ENCODE measurements at regions of chr10 and their contacts with region 1.

Region 1: GRCh38 chr10:97025613-97026242 is 160.0 kb downstream of the SLIT1 start:
- H3K4me3 Mint-ChIP-seq: no peak overlapping the region
- H3K27ac Mint-ChIP-seq: no peak overlapping the region
- H3K4me1 Mint-ChIP-seq: peaks cover 5% of the 10 kb centered on the region
- H3K27me3 Mint-ChIP-seq: no peaks in the 10 kb centered on the region

Region 2: DNA sequence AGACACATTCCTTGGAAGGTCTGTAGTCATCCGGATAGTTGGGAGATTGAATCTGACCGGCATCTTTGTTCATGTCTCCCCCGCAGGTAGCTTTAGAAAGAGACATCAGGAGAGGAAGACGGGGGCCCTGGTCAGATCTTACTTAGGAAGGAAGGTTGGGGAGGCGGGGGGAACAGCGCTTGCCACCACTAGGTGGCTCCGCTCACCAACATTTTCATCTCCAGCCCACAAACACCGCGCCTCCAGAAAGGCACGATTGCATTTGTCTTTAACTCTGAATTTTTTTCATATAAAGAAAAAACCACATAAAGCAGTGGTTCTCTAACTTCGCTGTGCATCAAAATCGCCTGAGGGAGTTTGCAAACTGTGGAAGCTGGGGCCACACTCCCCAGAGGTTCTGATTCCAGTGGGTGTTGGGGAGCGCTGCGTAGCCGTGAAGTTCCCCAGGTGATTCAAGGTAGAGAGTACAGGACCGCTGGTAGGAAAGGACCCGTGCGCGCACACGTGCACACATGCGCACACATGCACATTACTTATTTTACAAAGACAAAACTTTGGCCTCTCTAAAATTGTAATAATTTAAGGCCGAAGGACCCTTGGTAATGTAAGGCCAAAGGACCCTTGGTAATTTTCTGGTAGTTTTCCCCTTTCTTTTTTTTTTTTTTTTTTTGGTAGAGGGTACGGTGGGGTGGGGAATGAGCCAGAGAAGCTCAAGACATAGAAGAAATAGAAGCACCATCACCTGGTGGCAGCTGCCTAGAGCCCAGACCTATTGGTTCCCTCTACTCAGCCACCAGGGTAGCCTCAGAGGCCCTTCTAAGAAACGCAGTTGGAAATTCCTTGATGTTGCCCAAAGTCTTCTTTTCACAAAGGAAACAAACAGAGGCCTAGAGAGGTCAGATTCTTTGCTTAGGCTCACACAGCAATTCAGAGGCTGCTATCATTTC is 629.5 kb before region 1 on chr10:
- intact Hi-C with region 1: loop called (anchors 10 kb)
- H3K4me3 Mint-ChIP-seq: no peak overlapping the region
- H3K27ac Mint-ChIP-seq: no peak overlapping the region
- H3K4me1 Mint-ChIP-seq: peaks cover 1% of the 10 kb centered on the region
- H3K27me3 Mint-ChIP-seq: peaks cover 46% of the 10 kb centered on the region

Region 3: DNA sequence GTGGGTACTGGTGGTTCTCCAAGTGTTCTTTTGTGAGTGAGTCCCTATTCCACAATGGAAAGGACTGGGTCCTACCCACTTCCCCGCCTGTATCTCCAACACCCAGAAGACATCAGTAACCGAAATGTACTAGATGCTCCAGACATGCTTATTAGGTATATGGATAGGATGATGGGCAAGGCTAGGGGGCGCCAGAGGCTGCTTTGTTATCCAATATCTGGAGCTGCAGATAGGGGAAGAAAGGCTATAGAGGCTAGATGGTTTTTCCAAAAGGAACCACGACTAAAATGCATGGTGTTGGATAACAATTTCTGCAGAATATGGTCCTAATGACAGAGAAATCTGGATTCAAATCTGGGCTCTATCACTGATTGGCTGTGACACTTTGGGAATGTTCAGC is 382.8 kb before region 1 on chr10:
- intact Hi-C with region 1: loop called (anchors 5 kb)
- H3K4me3 Mint-ChIP-seq: no peak overlapping the region
- H3K27ac Mint-ChIP-seq: no peak overlapping the region
- H3K4me1 Mint-ChIP-seq: peaks cover 28% of the 10 kb centered on the region
- H3K27me3 Mint-ChIP-seq: no peaks in the 10 kb centered on the region

Region 4: DNA sequence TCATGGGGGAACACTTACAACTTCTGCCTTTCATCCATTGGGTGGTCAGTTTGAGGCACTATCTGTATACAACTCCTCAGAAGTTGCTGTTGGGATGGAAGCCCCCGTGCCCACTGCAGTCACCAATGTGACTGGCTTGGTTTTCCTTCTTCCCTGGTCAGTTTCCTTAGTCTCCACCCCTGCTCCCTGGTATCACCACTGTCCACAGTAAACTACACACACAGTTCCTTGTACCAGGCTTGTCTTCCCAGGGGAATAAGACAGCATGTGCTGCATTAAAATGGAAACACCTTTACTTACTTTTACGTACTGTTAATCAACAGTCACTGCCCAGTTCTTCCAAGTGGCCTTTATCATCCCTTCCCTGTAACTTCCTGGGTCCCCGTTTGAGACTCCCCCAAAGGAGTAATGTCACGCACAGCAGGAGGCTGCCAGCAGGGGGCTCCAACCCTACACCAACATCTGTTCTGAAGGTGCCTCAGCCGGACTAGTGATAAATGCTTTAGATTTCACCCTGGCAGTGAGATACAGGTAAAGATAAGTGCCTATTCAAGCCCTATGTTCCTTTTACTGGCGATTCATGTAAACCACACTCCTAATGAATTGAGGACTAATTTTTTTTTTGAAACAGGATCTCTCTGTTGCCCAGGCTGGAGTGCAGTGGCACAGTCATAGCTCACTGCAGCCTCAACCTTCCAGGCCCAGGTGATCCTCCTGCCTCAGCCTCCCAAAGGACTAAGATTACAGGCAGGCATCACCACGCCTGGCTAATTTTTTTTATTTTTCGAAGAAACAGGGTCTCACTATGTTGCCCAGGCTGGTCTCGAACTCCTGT is 260.1 kb before region 1 on chr10:
- intact Hi-C with region 1: loop called (anchors 10 kb)
- H3K4me3 Mint-ChIP-seq: no peak overlapping the region
- H3K27ac Mint-ChIP-seq: no peak overlapping the region
- H3K4me1 Mint-ChIP-seq: peaks cover 21% of the 10 kb centered on the region
- H3K27me3 Mint-ChIP-seq: no peaks in the 10 kb centered on the region

Region 5: GRCh38 chr10:96789571-96790108 is 236.1 kb before region 1 on chr10:
- intact Hi-C with region 1: loop called (anchors 5 kb)
- H3K4me3 Mint-ChIP-seq: no peak overlapping the region
- H3K27ac Mint-ChIP-seq: no peak overlapping the region
- H3K4me1 Mint-ChIP-seq: peaks cover 6% of the 10 kb centered on the region
- H3K27me3 Mint-ChIP-seq: peaks cover 2% of the 10 kb centered on the region

Region 6: GRCh38 chr10:96890172-96890513 is 135.6 kb before region 1 on chr10:
- intact Hi-C with region 1: no loop called
- H3K4me3 Mint-ChIP-seq: no peak overlapping the region
- H3K27ac Mint-ChIP-seq: peak overlapping the region; percentile 35
- H3K4me1 Mint-ChIP-seq: peaks cover 29% of the 10 kb centered on the region
- H3K27me3 Mint-ChIP-seq: no peaks in the 10 kb centered on the region

Region 7: DNA sequence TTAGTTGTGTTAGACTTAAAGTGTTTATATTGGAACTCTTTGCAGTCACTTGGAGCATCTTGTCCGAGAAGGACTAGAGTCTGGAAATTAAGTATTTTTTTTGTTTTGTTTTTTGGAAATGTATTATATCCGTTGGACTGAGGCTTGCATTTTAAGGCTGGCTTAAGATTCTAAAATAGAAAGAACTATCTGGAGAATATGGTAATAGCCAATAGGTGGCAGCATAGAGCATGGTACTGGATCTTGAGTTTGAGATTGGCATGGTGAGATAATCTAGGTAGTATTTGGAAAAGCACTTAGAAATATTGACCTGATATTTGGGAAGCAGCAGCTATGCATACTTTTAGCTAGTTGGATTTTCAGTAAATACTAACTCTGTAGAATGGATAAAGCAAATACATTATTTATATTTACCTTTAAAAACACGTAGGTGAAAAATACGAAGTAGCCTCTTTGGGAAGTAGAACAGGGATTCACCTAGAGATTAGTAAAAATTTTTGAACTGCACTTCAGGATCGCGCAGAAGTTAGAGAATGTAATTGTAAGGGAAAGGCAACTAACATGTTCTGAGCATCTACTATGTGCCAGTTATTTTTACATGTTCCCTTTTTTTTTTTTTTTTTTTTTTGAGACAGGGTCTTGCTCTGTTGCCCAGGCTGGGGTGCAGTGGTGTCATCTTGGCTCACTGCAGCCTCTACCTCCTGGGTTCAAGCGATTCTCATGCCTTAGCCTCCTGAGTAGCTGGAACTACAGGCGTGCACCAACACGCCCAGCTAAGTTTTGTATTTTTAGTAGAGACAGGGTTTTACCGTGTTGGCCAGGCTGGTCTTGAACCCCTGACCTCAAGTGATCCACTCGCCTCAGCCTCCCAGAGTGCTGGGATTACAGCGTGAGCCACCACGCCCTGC is 115.0 kb before region 1 on chr10:
- intact Hi-C with region 1: loop called (anchors 5 kb)
- H3K4me3 Mint-ChIP-seq: no peak overlapping the region
- H3K27ac Mint-ChIP-seq: no peak overlapping the region
- H3K4me1 Mint-ChIP-seq: peaks cover 14% of the 10 kb centered on the region
- H3K27me3 Mint-ChIP-seq: no peaks in the 10 kb centered on the region

Region 8: DNA sequence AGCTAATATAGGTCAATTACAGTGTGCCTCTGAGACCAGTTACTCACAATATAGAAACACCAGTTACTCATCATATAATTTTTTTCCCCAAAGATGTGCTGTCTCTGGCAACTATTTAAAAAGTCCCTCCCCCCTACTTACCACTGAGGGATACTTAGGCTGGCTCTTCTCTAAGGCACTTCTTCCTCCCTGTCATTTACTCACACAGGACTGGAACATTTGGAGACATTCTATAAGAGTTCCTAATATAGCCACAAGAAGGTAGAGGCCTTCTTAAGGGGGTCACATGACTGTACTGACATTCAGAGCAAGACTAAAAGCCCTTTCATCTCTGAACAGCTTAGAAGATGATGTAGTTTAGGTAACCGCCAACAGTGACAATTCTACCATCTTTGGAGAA is 204.4 kb after region 1 on chr10:
- intact Hi-C with region 1: no loop called
- H3K4me3 Mint-ChIP-seq: no peak overlapping the region
- H3K27ac Mint-ChIP-seq: no peak overlapping the region
- H3K4me1 Mint-ChIP-seq: peaks cover 23% of the 10 kb centered on the region
- H3K27me3 Mint-ChIP-seq: no peaks in the 10 kb centered on the region

Region 9: DNA sequence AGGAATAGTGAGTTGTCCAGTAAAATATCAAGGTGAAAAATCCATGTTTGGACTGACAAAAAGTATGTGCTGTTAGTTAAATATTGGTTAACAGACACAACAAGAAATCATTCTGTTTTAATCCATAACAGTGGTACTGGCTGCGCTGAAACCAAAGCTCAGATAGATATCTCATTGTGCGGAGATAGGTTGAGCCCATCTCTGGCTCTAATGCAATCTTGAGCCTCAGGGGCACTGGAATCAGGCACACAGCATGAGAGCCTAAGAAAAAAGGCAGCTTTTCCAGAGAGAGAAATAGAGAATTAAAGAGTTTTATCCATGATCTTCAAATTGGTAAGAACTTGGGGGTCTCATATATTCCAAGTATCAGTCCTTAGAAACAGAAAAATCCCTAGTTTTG is 1836.2 kb after region 1 on chr10:
- intact Hi-C with region 1: no loop called
- H3K4me3 Mint-ChIP-seq: no peak overlapping the region
- H3K27ac Mint-ChIP-seq: no peak overlapping the region
- H3K4me1 Mint-ChIP-seq: no peaks in the 10 kb centered on the region
- H3K27me3 Mint-ChIP-seq: peaks cover 2% of the 10 kb centered on the region

Measured in dendritic cell treated with granulocyte-macrophage colony-stimulating factor and Interleukin-4, amounts not matched to agents 40 ng/mL and 50 ng/mL, for 4 days (primary cell).